ENCODE measurements at regions of chr1 and their contacts with region 1.

Region 1: DNA sequence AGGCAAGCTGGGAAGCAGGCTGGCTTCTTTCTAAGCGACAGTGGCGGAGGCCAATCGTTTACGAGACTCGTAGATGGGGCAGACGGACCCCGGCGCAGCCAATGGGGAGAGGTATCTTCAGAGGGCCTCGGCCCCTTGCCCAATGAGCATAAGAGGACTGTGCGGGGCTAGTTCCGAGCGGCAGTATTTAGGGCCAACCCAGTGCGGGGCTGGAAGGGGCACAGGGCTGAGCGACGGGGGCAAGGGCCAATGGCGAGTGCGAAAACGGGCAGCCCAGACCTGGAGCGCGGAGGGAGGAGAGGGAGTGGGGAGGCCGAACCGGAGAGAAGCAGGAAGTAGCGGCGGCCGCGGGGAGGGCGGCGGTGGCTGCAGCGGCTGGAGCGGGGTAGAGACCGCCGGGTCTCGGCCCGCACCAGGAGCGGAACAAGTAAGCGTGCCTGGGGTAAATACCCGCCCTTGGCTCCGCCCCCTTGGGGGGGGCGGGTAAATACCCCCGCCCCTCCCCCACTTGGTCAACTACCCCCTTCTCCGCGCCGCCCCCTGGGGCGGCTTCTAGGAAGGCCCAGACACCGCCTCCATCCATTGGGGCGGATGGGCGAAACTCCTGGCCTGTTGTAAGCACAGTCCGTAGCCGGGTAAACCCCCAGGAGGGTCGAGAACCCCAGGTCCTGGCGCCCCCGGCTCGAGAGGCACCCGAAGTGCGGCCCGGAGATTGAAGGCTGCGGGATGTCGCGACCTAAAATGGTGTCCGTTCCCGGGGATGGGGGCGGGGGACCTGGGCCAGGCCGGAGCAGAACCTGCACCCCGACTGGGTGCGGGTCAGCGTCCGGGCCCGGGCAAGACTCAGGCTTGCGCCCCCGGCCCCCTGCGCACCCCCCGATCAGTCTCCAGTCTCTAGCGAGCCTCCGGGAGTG is at the start of gene ZNF687:
- DNase-seq: peak; percentile 98 to 99
- ATAC-seq: peak; percentile 80 to 94 (median 84)
- H3K4me3 ChIP-seq: peak within 1 kb of the TSS; percentile 82
- H3K4me3 Mint-ChIP-seq: peak within 1 kb of the TSS; percentile 98
- H3K27ac ChIP-seq: peak within 1 kb of the TSS; percentile 93
- H3K27ac Mint-ChIP-seq: peak within 1 kb of the TSS; percentile 95 to 100
- H3K4me1 ChIP-seq: peaks cover 24% of the 10 kb centered on the region
- H3K4me1 Mint-ChIP-seq: peaks cover 31 to 33% of the 10 kb centered on the region in 2 donors
- H3K27me3 ChIP-seq: no peaks in the 10 kb centered on the region
- H3K27me3 Mint-ChIP-seq: no peaks in the 10 kb centered on the region
- CTCF ChIP-seq: no peak
- total RNA-seq, gene ZNF687: 48.1 to 52.2 (median 48.6) TPM

Region 2: DNA sequence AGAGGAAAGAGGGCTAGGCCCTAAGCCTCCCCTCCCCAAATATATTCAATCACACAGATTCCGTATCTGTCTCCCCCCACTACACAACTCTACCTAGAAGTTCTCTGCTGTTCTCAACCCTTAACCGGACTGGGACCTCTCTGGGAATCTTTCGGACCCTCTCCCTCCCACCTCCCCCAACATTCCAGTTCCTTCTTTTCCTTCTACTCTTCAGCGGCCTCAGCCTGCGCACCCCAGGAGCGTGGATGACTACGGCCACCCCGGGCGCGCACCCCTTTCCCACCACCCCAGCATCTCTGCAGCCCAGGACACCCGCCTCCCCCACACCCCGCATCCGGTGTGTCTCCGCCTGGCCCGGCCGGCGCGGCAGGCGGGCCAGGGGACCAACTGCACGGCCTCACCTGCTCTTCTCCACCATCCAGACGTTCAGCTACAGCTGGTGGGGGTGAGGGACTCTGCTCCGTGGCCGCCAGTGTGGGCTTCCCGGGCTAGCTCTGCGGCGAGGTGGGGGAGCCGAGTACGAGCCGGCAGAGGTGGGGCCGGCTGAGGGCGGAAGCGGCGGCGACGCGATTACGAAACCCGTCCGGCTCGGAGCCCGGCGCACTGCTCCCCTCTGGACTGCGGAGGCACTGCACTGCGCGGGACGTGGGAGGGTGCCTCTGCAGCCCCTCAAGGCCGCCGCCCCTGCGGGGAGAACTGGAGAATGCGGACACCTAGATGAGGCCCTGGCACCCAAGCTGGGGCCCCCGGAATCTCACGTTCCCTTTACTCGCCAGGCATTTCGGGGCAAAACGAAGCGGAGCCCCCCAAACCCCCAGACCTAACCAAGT is 222.9 kb before region 1 on chr1 and contains the start of gene CDC42SE1:
- intact Hi-C with region 1: loop called (anchors 5 kb)
- DNase-seq: peak; percentile 84 to 94
- ATAC-seq: peak; percentile 56 to 83 (median 67)
- H3K4me3 ChIP-seq: peak within 1 kb of the TSS; percentile 95
- H3K4me3 Mint-ChIP-seq: peak within 1 kb of the TSS; percentile 92
- H3K27ac ChIP-seq: peak within 1 kb of the TSS; percentile 89
- H3K27ac Mint-ChIP-seq: peak within 1 kb of the TSS; percentile 98 to 99
- H3K4me1 ChIP-seq: peaks cover 41% of the 10 kb centered on the region
- H3K4me1 Mint-ChIP-seq: peaks cover 65 to 69% of the 10 kb centered on the region in 2 donors
- H3K27me3 ChIP-seq: no peaks in the 10 kb centered on the region
- H3K27me3 Mint-ChIP-seq: no peaks in the 10 kb centered on the region
- CTCF ChIP-seq: peak; percentile 78
- total RNA-seq, gene CDC42SE1: 555 to 792 (median 752) TPM

Region 3: GRCh38 chr1:151327223-151327902 is 45.1 kb after region 1 on chr1 and contains the start of gene PI4KB:
- intact Hi-C with region 1: loop called (anchors 1 kb)
- DNase-seq: peak; percentile 79 to 97
- ATAC-seq: peak; percentile 90 to 97 (median 92)
- H3K4me3 ChIP-seq: peak within 1 kb of the TSS; percentile 74
- H3K4me3 Mint-ChIP-seq: peak within 1 kb of the TSS; percentile 95
- H3K27ac ChIP-seq: peak within 1 kb of the TSS; percentile 94
- H3K27ac Mint-ChIP-seq: peak within 1 kb of the TSS; percentile 95 to 97
- H3K4me1 ChIP-seq: peaks cover 20% of the 10 kb centered on the region
- H3K4me1 Mint-ChIP-seq: peaks cover 30 to 42% of the 10 kb centered on the region in 2 donors
- H3K27me3 ChIP-seq: no peaks in the 10 kb centered on the region
- H3K27me3 Mint-ChIP-seq: no peaks in the 10 kb centered on the region
- CTCF ChIP-seq: no peak
- total RNA-seq, gene PI4KB: 68.2 to 99.3 (median 95.0) TPM

Region 4: GRCh38 chr1:151346769-151347522 is 64.7 kb after region 1 on chr1 and contains the start of gene RFX5:
- intact Hi-C with region 1: loop called (anchors 1 kb)
- DNase-seq: peak; percentile 88 to 98
- ATAC-seq: peak; percentile 92 to 97 (median 92)
- H3K4me3 ChIP-seq: peak within 1 kb of the TSS; percentile 56
- H3K4me3 Mint-ChIP-seq: peak within 1 kb of the TSS; percentile 99
- H3K27ac ChIP-seq: peak within 1 kb of the TSS; percentile 89
- H3K27ac Mint-ChIP-seq: peak within 1 kb of the TSS; percentile 100
- H3K4me1 ChIP-seq: peaks cover 16% of the 10 kb centered on the region
- H3K4me1 Mint-ChIP-seq: peaks cover 31 to 32% of the 10 kb centered on the region in 2 donors
- H3K27me3 ChIP-seq: no peaks in the 10 kb centered on the region
- H3K27me3 Mint-ChIP-seq: no peaks in the 10 kb centered on the region
- CTCF ChIP-seq: no peak
- total RNA-seq, gene RFX5: 72.6 to 111 (median 110) TPM

Region 5: GRCh38 chr1:151526735-151527525 is 244.7 kb after region 1 on chr1:
- intact Hi-C with region 1: no loop called
- DNase-seq: no peak
- ATAC-seq: no peak
- H3K4me3 ChIP-seq: no peak overlapping the region
- H3K4me3 Mint-ChIP-seq: no peak overlapping the region
- H3K27ac ChIP-seq: no peak overlapping the region
- H3K27ac Mint-ChIP-seq: no peak overlapping the region
- H3K4me1 ChIP-seq: no peaks in the 10 kb centered on the region
- H3K4me1 Mint-ChIP-seq: no peaks in the 10 kb centered on the region
- H3K27me3 ChIP-seq: peaks cover 2% of the 10 kb centered on the region
- H3K27me3 Mint-ChIP-seq: peaks cover 4 to 6% of the 10 kb centered on the region in 2 donors
- CTCF ChIP-seq: no peak

Region 6: GRCh38 chr1:151790071-151790940 is 508.1 kb after region 1 on chr1 and contains the start of gene TDRKH:
- intact Hi-C with region 1: loop called (anchors 2 kb)
- DNase-seq: peak; percentile 96 to 99
- ATAC-seq: peak; percentile 92 to 98 (median 94)
- H3K4me3 ChIP-seq: peak within 1 kb of the TSS; percentile 96
- H3K4me3 Mint-ChIP-seq: peak within 1 kb of the TSS; percentile 100
- H3K27ac ChIP-seq: peak within 1 kb of the TSS; percentile 59
- H3K27ac Mint-ChIP-seq: peak within 1 kb of the TSS; percentile 93 to 94
- H3K4me1 ChIP-seq: peaks cover 9% of the 10 kb centered on the region
- H3K4me1 Mint-ChIP-seq: peaks cover 20 to 34% of the 10 kb centered on the region in 2 donors
- H3K27me3 ChIP-seq: no peaks in the 10 kb centered on the region
- H3K27me3 Mint-ChIP-seq: no peaks in the 10 kb centered on the region
- CTCF ChIP-seq: peak; percentile 17
- total RNA-seq, gene TDRKH: 6.3 to 14.5 (median 8.0) TPM